GM13976 (cell line): ENCODE measurements at regions of chr5 and their contacts with region 1.

Region 1: GRCh38 chr5:170097934-170098333 is 7.8 kb upstream of the FOXI1 start:
- DNase-seq: no peak
- CTCF ChIP-seq: no peak

Region 2: DNA sequence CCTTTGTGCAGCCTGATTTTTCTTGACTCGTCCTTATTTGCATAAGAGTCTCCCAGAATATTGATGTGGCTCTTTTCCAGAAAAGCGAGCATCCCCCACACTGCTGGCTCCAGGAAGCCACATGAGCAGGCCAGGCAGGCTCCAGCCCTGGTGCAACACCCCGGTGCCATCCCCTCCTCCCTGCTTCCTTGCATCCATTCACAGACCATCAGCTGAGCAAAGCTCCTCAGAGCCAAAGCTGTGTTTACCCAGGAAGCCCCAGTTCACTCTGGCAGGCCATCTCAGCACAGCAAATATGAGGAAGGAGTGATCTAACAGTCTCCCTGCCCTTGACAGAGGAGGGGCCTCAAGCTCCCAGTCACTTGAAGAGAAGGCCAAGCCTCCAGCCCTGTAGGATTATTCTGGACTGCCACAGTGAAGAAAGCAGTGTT is 152.1 kb before region 1 on chr5:
- in situ Hi-C with region 1: no loop called
- DNase-seq: no peak
- CTCF ChIP-seq: no peak

Region 3: DNA sequence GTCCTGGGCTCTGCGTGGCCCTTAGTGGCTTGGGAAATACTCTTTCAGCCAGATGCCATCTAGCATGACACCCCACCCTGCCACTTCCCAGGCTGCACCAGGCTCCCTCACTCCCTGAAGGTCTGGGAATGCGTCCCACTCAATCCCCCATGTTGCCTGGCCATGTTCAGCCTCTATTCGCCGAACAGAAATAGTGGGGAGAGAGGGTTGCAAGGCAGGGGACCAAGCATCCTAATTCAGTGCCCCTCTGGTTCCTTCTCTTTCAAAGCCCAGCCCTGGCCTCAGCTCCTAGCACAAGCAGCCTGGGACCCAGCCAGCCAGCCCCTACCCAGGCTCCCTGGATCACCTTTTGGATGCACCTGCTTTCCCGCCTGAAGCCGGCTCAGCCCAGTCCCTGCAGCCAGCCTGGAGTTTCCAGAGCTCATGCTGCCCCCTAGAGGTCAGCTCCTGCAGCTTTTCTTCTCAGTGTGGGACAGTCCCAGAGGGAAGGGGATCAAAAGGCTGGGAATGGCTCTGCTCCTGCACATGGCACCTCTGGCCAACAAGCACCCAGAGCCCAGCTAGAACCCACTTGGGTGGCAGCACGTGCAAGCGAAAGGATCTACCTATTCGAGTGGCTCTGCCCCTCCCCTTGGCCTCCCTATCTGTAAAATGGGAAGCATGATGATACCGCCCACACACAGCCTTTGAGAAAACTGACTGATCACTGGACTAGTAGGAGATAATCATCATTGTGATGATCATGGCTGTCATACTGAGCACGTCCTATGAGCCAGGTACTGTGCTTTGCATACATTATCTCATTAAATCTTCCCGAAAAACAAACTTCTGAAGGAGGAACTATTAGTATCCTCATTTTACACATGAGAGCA is 86.1 kb after region 1 on chr5:
- in situ Hi-C with region 1: loop called (anchors 10 kb)
- DNase-seq: peak; percentile 64
- CTCF ChIP-seq: peak; percentile 80